Activated naive CD4-positive, alpha-beta T cell treated with anti-CD3 and anti-CD28 coated beads for 36 hours (primary cell): ENCODE measurements at regions of chr6 and their contacts with region 1.

Region 1: DNA sequence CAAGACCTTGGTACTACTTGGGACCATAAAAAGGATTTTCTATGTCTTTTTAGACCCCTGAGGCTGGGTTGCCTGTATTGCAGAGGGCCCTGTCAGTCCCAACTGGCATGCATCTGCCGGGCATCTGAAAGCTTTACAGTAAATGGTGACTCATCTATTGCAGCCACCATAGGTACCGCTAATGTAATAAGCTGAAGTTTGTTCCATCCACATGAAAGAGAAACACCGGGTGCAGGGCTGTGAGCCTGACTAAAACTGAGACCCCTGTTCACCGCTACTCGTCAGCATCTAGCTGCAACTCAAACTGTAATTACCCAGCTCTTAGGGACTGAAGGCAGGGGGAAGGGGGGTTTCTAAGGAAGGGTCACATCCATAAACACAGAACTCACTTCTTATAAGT is 49.5 kb downstream of the TRERF1 start:
- DNase-seq: peak; percentile 85
- H3K4me3 Mint-ChIP-seq: no peak overlapping the region
- H3K27ac Mint-ChIP-seq: peak overlapping the region; percentile 50
- H3K4me1 Mint-ChIP-seq: peaks cover 65% of the 10 kb centered on the region
- H3K27me3 Mint-ChIP-seq: no peaks in the 10 kb centered on the region

Region 2: GRCh38 chr6:42352856-42353564 is 49.2 kb before region 1 on chr6:
- CTCF ChIA-PET with region 1: no interaction called
- intact Hi-C with region 1: loop called (anchors 1 kb)
- DNase-seq: no peak
- H3K4me3 Mint-ChIP-seq: no peak overlapping the region
- H3K27ac Mint-ChIP-seq: no peak overlapping the region
- H3K4me1 Mint-ChIP-seq: peaks cover 11% of the 10 kb centered on the region
- H3K27me3 Mint-ChIP-seq: no peaks in the 10 kb centered on the region

Region 3: GRCh38 chr6:42417641-42418112 is 15.5 kb after region 1 on chr6:
- CTCF ChIA-PET with region 1: interaction called, 3 read pairs
- intact Hi-C with region 1: loop called (anchors 2 kb)
- DNase-seq: peak; percentile 74
- H3K4me3 Mint-ChIP-seq: no peak overlapping the region
- H3K27ac Mint-ChIP-seq: no peak overlapping the region
- H3K4me1 Mint-ChIP-seq: peaks cover 49% of the 10 kb centered on the region
- H3K27me3 Mint-ChIP-seq: no peaks in the 10 kb centered on the region

Region 4: DNA sequence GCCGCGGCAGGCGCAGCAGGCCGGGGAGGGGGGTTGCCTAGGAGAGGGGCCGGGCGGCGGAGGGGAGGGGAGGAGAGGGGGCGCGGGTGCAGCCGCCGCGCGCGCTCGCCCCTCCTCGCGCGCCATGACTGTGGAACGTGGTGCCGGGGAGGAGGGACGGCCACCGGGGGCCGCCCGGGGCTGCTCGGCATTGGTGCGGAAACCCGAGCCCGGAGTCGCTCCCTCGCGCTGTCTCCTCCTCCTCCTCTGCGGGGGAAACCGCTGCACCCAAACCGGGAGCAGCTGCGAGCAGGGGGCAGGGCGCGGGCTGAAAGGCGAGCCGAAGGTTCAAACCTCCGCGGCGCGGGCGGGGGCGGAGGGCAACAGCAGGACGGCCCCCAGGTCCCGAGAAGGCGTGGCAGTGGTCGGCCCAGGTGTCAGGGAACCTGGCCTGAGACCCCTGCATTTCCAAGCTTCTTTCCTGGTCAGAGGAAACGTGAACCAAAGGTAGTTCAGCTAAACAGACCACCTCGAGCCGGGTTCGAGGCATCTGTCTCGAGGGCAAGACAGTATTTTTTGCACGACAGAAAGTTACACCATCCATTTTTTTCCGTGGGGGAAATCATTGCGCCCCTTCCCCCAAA is 51.0 kb after region 1 on chr6:
- CTCF ChIA-PET with region 1: no interaction called
- intact Hi-C with region 1: loop called (anchors 1 kb)
- DNase-seq: peak; percentile 87
- H3K4me3 Mint-ChIP-seq: peak overlapping the region; percentile 88
- H3K27ac Mint-ChIP-seq: peak overlapping the region; percentile 81
- H3K4me1 Mint-ChIP-seq: peaks cover 32% of the 10 kb centered on the region
- H3K27me3 Mint-ChIP-seq: peaks cover 7% of the 10 kb centered on the region

Region 5: DNA sequence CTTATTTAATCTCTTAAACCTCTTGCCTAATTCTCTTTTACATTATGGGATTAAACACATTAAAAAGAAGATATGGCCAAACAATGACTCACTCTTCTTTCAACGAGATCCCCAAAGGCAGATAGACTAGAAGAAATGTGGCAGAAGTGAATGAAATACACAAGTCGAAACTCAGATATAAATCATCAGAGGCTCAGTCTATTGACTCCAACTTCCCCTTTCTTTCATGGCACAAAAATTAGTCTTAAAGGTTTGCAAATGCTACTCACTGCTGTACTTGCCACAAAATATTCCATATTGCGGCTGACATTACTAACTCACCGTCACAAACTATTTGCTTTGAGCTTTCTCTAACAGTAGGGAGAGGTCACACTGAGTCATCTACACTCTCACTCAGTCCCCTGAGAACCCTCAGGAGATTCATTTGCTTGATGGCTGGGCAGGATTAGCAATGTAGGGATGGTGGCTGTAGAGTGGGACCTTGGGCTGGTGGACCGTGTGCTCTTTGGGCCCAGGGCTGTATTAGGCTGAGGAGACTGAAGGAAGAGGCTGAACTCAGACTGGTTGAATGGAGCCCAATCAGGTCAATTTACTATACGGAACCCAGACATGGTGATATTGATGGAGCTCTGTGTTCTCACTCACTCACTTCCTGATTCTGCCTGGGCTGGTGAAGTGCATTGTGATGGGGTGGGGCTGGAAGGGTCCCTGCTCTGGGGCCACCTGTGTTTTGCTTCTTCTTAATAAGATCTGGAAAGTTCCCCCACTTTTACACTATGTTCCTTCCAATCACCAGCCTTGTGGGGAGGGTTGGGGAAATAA is 118.8 kb after region 1 on chr6:
- CTCF ChIA-PET with region 1: no interaction called
- intact Hi-C with region 1: loop called (anchors 1 kb)
- DNase-seq: peak; percentile 56
- H3K4me3 Mint-ChIP-seq: no peak overlapping the region
- H3K27ac Mint-ChIP-seq: peak overlapping the region; percentile 38
- H3K4me1 Mint-ChIP-seq: peaks cover 18% of the 10 kb centered on the region
- H3K27me3 Mint-ChIP-seq: no peaks in the 10 kb centered on the region